ENCODE measurements at regions of chr1 and their contacts with region 1.

Region 1: DNA sequence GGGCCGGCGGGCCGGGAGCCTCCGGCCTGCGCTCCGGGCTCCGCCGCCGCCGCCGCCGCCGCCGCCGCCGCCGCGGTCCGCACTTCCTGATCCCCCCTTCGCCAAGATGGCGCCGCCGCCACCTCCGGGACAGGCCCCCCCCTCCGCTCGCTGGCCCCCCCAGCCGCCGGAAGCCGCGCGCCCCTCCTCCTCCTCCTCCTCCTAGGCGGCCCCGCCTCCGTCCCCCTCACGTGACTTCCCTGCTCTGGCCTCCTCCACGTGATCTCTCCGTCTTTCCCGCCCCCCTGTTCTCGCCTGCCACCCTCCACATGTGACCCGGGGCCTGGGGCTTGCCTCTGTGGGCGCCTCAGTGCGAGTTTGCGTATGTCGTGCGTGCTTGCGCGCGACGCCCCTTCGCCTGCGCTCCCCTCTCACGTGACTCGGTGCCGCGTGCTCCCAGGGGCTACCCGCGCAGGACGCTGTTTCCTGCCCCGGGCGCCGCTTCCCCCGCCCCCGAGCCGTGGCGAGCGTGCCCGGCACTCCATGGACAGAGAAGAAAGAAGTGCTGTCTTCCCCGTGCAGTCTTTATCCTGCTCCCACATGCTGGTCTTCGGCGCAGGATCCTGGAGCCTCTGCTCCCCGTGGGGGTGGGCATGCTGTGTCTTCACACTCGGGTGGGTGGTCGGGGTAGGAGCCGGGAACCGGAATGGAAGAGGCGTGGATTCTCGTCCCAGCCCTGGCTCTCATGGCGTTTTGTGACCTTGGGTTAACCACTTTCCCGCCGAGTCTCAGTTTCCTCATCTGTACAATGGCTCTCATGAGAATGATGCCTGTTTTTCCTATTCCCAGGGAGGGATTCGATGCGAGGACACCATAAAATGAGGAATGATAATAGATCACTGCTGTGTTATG is at the start of gene UBE2Q1:
- DNase-seq: peak; percentile 100
- ATAC-seq: peak; percentile 97
- total RNA-seq, gene UBE2Q1: 53.2 TPM

Region 2: GRCh38 chr1:154404984-154405761 is 153.6 kb before region 1 on chr1 and contains the start of gene IL6R:
- intact Hi-C with region 1: loop called (anchors 5 kb)
- DNase-seq: peak; percentile 98
- ATAC-seq: peak; percentile 93
- total RNA-seq, gene IL6R: 13.1 TPM

Region 3: GRCh38 chr1:154669464-154670282 is 110.9 kb after region 1 on chr1:
- intact Hi-C with region 1: loop called (anchors 5 kb)
- DNase-seq: peak; percentile 81
- ATAC-seq: peak; percentile 96

Region 4: GRCh38 chr1:154878371-154879022 is 319.7 kb after region 1 on chr1:
- intact Hi-C with region 1: loop called (anchors 1 kb)
- DNase-seq: peak; percentile 89
- ATAC-seq: peak; percentile 92

Region 5: DNA sequence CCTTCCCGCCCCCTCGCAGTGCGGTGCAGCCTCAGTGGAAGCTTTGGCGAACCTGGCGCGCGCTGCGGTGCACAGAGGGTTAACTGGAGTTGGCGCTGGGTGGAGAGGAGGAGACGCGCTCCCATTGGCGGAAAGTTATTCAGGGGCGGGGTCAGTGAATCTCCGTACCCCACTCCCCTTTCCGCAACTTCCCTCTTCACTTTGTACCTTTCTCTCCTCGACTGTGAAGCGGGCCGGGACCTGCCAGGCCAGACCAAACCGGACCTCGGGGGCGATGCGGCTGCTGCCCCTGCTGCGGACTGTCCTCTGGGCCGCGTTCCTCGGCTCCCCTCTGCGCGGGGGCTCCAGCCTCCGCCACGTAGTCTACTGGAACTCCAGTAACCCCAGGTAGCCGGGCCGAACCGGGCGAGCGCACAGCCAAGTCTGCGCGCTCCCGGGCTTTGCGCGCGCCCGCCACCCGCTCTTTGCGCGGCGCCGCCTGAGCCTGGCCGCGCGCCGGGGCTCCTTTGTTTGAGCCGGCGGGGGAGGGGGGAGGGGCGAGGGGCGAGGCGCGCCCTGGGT is 504.8 kb after region 1 on chr1 and contains the start of gene EFNA4:
- intact Hi-C with region 1: loop called (anchors 2 kb)
- DNase-seq: peak; percentile 89
- ATAC-seq: peak; percentile 92
- total RNA-seq, gene EFNA4: 2.1 TPM